ENCODE measurements at regions of chrX and their contacts with region 1.

Region 1: GRCh38 chrX:110146521-110146920 is 143.6 kb downstream of the TMEM164 start:
- DNase-seq: peak; percentile 48
- H3K4me3 Mint-ChIP-seq: no peak overlapping the region
- H3K27ac Mint-ChIP-seq: no peak overlapping the region
- H3K4me1 Mint-ChIP-seq: peaks cover 4% of the 10 kb centered on the region
- H3K27me3 Mint-ChIP-seq: no peaks in the 10 kb centered on the region

Region 2: GRCh38 chrX:109403927-109404326 is 742.6 kb before region 1 on chrX:
- CTCF ChIA-PET with region 1: no interaction called
- intact Hi-C with region 1: no loop called
- DNase-seq: no peak
- H3K4me3 Mint-ChIP-seq: no peak overlapping the region
- H3K27ac Mint-ChIP-seq: no peak overlapping the region
- H3K4me1 Mint-ChIP-seq: no peaks in the 10 kb centered on the region
- H3K27me3 Mint-ChIP-seq: peaks cover 7% of the 10 kb centered on the region

Region 3: GRCh38 chrX:109485470-109486340 is 660.8 kb before region 1 on chrX:
- CTCF ChIA-PET with region 1: no interaction called
- intact Hi-C with region 1: loop called (anchors 5 kb)
- DNase-seq: peak; percentile 74
- H3K4me3 Mint-ChIP-seq: no peak overlapping the region
- H3K27ac Mint-ChIP-seq: no peak overlapping the region
- H3K4me1 Mint-ChIP-seq: no peaks in the 10 kb centered on the region
- H3K27me3 Mint-ChIP-seq: peaks cover 4% of the 10 kb centered on the region

Region 4: GRCh38 chrX:109511113-109511512 is 635.4 kb before region 1 on chrX:
- CTCF ChIA-PET with region 1: no interaction called
- intact Hi-C with region 1: no loop called
- DNase-seq: no peak
- H3K4me3 Mint-ChIP-seq: no peak overlapping the region
- H3K27ac Mint-ChIP-seq: no peak overlapping the region
- H3K4me1 Mint-ChIP-seq: no peaks in the 10 kb centered on the region
- H3K27me3 Mint-ChIP-seq: peaks cover 5% of the 10 kb centered on the region

Region 5: GRCh38 chrX:109911046-109911445 is 235.5 kb before region 1 on chrX:
- CTCF ChIA-PET with region 1: interaction called, 6 read pairs
- intact Hi-C with region 1: loop called (anchors 1 kb)
- DNase-seq: no peak
- H3K4me3 Mint-ChIP-seq: no peak overlapping the region
- H3K27ac Mint-ChIP-seq: no peak overlapping the region
- H3K4me1 Mint-ChIP-seq: no peaks in the 10 kb centered on the region
- H3K27me3 Mint-ChIP-seq: no peaks in the 10 kb centered on the region

Region 6: GRCh38 chrX:110002300-110003166 is 144.0 kb before region 1 on chrX and contains the start of gene TMEM164:
- CTCF ChIA-PET with region 1: no interaction called
- intact Hi-C with region 1: loop called (anchors 1 kb)
- DNase-seq: peak; percentile 83
- H3K4me3 Mint-ChIP-seq: peak within 1 kb of the TSS; percentile 83
- H3K27ac Mint-ChIP-seq: peak within 1 kb of the TSS; percentile 81
- H3K4me1 Mint-ChIP-seq: peaks cover 31% of the 10 kb centered on the region
- H3K27me3 Mint-ChIP-seq: no peaks in the 10 kb centered on the region
- total RNA-seq, gene TMEM164: 11.9 to 12.0 TPM

Region 7: GRCh38 chrX:110044346-110045249 is 101.9 kb before region 1 on chrX:
- CTCF ChIA-PET with region 1: no interaction called
- intact Hi-C with region 1: loop called (anchors 5 kb)
- DNase-seq: no peak
- H3K4me3 Mint-ChIP-seq: no peak overlapping the region
- H3K27ac Mint-ChIP-seq: no peak overlapping the region
- H3K4me1 Mint-ChIP-seq: peaks cover 32% of the 10 kb centered on the region
- H3K27me3 Mint-ChIP-seq: no peaks in the 10 kb centered on the region

Region 8: DNA sequence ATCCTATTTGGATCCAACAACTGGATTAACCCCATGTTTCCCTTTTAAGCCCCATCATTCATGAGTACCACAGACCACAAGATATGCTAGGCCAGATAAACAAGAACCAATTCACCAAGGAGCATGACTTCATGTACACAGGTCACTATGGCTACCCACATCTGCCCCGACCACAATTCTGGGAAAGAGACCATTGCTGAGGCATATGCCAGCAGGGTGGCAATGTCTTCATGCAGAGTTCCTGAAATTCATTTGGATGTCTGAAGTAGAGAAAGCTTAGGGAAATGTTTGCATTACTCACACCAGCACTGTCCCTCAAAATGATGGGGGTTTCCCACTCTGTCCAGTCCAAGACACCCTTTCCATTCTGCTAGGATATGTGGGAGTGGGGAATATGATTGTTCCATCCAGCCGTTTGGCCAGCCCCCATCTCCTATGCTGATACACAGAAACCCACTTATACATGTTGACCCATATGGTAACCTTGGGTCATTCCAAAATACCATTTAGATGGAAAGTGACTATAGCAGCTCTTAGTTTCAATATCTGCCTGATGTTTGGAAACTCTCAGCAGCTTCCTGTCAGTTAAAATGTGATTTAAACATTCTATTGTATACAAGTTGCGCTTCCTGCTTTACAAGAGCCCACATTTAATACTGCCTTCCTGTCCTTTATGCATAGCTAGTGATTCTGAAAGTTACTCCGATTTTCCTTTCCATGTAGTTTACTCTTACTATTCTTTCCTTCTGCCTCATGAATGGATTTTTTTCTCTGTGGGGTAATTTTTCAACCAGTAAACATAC is 42.4 kb after region 1 on chrX:
- CTCF ChIA-PET with region 1: no interaction called
- intact Hi-C with region 1: no loop called
- DNase-seq: no peak
- H3K4me3 Mint-ChIP-seq: no peak overlapping the region
- H3K27ac Mint-ChIP-seq: peak overlapping the region; percentile 83
- H3K4me1 Mint-ChIP-seq: peaks cover 13% of the 10 kb centered on the region
- H3K27me3 Mint-ChIP-seq: no peaks in the 10 kb centered on the region

Region 9: GRCh38 chrX:110407910-110408545 is 261.5 kb after region 1 on chrX:
- CTCF ChIA-PET with region 1: interaction called, 11 read pairs
- intact Hi-C with region 1: no loop called
- DNase-seq: peak; percentile 50
- H3K4me3 Mint-ChIP-seq: no peak overlapping the region
- H3K27ac Mint-ChIP-seq: no peak overlapping the region
- H3K4me1 Mint-ChIP-seq: peaks cover 4% of the 10 kb centered on the region
- H3K27me3 Mint-ChIP-seq: no peaks in the 10 kb centered on the region

Measured in activated naive CD4-positive, alpha-beta T cell treated with anti-CD3 and anti-CD28 coated beads for 36 hours (primary cell).